GM10248 (cell line): ENCODE measurements at regions of chr13 and their contacts with region 1.

Region 1: DNA sequence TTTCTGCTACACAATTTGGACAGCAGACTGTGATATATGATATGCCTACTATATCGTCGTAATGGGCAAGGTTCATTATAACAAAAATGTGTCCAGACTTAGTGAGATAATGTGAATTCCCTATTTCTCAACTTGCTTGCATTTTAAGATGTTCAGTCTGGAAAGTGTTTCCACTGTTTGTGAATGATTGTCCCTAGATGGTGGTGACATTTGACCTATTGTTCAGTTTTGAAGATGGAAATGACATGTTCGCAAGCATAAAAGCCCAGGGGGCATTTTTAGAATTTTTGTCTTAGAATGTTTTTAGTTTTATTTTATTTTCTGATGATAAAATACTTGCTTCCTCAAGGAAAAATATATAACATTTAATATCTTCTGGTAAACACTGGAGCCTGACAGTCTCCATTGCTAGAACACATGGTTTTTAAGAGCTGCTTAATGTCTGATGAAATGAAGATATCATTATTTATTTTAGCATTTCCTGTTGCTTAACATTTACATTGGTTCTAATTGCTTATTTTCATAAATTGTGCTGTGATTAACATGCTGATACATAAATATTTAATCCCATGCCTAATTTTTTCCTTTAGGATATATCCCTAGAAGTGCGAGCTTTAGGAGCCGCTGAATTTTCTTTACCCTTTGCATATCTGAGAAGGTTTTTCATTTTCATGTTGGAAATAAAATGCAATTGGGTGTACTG is 27.1 kb downstream of the MBNL2 start:
- DNase-seq: no peak
- CTCF ChIP-seq: no peak

Region 2: GRCh38 chr13:96540671-96541070 is 708.6 kb before region 1 on chr13:
- CTCF ChIA-PET with region 1: no interaction called
- POLR2A ChIA-PET with region 1: no interaction called
- DNase-seq: no peak
- CTCF ChIP-seq: no peak

Region 3: GRCh38 chr13:97231118-97231828 is 18.0 kb before region 1 on chr13:
- CTCF ChIA-PET with region 1: interaction called, 10 read pairs
- POLR2A ChIA-PET with region 1: no interaction called
- DNase-seq: no peak
- CTCF ChIP-seq: no peak

Region 4: GRCh38 chr13:97266332-97266731 is 17.1 kb after region 1 on chr13:
- CTCF ChIA-PET with region 1: interaction called, 10 read pairs
- POLR2A ChIA-PET with region 1: no interaction called
- DNase-seq: no peak
- CTCF ChIP-seq: no peak